IMR-90 (cell line): ENCODE measurements at regions of chr1 and their contacts with region 1.

Region 1: GRCh38 chr1:14441302-14441741 is 157.2 kb upstream of the KAZN start:
- DNase-seq: peak; percentile 83
- ATAC-seq: peak; percentile 19; the same call in 1 of the 2 replicates
- H3K4me3 ChIP-seq: no peak overlapping the region
- H3K27ac ChIP-seq: peak overlapping the region; percentile 51; the same call in 1 of the 2 replicates
- H3K4me1 ChIP-seq: peaks cover 8% of the 10 kb centered on the region
- H3K27me3 ChIP-seq: no peaks in the 10 kb centered on the region
- CTCF ChIP-seq: no peak
- POLR2A ChIP-seq: no peak
- RAD21 ChIP-seq: no peak

Region 2: DNA sequence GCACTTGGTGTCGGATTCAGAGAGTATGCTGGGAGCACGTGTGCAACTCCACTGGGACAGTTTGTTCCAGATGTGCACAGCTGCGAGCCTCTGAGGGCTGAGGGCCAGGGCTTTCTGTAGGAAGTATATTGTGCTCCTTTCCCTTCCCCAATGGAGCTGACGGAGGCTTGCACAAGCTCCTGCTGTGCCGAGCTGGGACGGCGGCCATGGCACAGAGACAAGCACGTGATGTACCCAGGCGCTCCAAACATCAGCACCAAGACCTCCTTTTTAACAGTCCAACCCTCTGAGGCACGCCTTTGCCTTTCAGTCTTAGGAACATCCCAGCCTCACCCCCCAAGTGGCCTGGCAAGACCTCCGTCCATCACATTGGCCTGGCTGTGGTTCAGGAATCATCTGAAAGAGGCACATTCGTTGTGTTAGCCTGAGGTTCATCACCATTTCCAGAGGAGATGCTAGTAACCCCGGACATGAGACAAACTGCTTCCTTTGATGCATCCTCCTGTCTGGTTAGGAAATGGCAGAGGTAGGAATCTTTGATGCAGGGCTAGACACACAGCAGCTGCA is 182.0 kb before region 1 on chr1:
- CTCF ChIA-PET with region 1: no interaction called
- POLR2A ChIA-PET with region 1: no interaction called
- dilution Hi-C with region 1: no loop called
- in situ Hi-C with region 1: no loop called
- intact Hi-C with region 1: no loop called
- DNase-seq: no peak
- ATAC-seq: no peak
- H3K4me3 ChIP-seq: no peak overlapping the region
- H3K27ac ChIP-seq: no peak overlapping the region
- H3K4me1 ChIP-seq: no peaks in the 10 kb centered on the region
- H3K27me3 ChIP-seq: no peaks in the 10 kb centered on the region; the same call in 1 of the 2 replicates
- CTCF ChIP-seq: no peak
- POLR2A ChIP-seq: no peak
- RAD21 ChIP-seq: no peak

Region 3: GRCh38 chr1:14486401-14487201 is 45.3 kb after region 1 on chr1:
- CTCF ChIA-PET with region 1: no interaction called
- POLR2A ChIA-PET with region 1: no interaction called
- dilution Hi-C with region 1: no loop called
- in situ Hi-C with region 1: no loop called
- intact Hi-C with region 1: loop called (anchors 5 kb)
- DNase-seq: peak; percentile 69
- ATAC-seq: peak; percentile 83
- H3K4me3 ChIP-seq: no peak overlapping the region
- H3K27ac ChIP-seq: peak overlapping the region; percentile 3; the same call in 1 of the 2 replicates
- H3K4me1 ChIP-seq: peaks cover 8% of the 10 kb centered on the region; the same call in 1 of the 2 replicates
- H3K27me3 ChIP-seq: no peaks in the 10 kb centered on the region
- CTCF ChIP-seq: no peak
- POLR2A ChIP-seq: no peak
- RAD21 ChIP-seq: no peak